ENCODE measurements at regions of chr16 and their contacts with region 1.

Region 1: GRCh38 chr16:80197741-80198201 is 343.0 kb upstream of the DYNLRB2 start:
- DNase-seq: no peak
- H3K4me3 ChIP-seq: no peak overlapping the region
- H3K27ac ChIP-seq: no peak overlapping the region
- H3K4me1 ChIP-seq: no peaks in the 10 kb centered on the region
- H3K27me3 ChIP-seq: no peaks in the 10 kb centered on the region
- CTCF ChIP-seq: no peak
- EP300 ChIP-seq: no peak
- POLR2A ChIP-seq: no peak

Region 2: DNA sequence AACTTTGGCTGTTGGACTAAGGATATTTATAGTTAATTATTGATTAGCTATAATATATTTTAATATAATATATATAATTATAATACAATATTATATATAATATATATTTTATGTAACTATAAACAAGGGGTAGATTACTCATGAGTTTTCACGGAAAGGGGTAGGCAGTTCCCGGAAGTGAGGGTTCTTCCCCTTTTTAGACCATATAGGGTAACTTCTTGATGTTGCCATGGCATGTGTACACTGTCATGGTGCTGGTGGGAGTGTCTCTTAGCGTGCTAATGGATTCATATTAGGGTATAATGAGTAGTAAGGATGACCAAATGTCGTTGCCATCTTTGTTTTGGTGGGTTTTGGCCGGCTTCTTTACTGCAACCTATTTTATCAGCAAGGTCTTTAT is 1782.8 kb before region 1 on chr16:
- intact Hi-C with region 1: loop called in 1 of 4 experiments (anchors 10 kb)
- DNase-seq: no peak
- H3K4me3 ChIP-seq: no peak overlapping the region
- H3K27ac ChIP-seq: no peak overlapping the region
- H3K4me1 ChIP-seq: no peaks in the 10 kb centered on the region
- H3K27me3 ChIP-seq: no peaks in the 10 kb centered on the region
- CTCF ChIP-seq: no peak
- EP300 ChIP-seq: no peak
- POLR2A ChIP-seq: no peak

Measured in ovary (tissue), 10 donors.